ENCODE measurements at regions of chrX and their contacts with region 1.

Region 1: DNA sequence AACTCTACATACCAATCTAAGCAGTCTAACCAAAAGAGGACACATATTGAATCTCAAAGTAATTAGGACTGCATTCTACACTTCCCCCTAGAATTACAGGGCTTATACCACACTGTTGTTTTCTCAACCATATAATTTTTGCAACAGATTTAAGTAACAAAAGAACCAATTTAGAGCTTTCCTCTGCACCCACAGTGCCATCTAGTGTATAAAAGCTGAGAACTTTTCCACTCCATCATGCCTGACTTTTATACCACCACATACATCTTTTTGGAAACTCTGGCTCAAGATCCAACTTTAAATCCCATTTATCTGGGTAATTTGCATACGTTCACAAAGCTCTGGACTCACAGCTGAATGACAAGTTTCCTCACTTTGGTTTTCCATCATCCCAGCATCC is 99.5 kb downstream of the EFHC2 start:
- DNase-seq: no peak
- ATAC-seq: no peak
- H3K4me3 Mint-ChIP-seq: no peak overlapping the region
- H3K27ac Mint-ChIP-seq: no peak overlapping the region
- H3K4me1 Mint-ChIP-seq: peaks cover 4% of the 10 kb centered on the region
- H3K27me3 Mint-ChIP-seq: no peaks in the 10 kb centered on the region

Region 2: DNA sequence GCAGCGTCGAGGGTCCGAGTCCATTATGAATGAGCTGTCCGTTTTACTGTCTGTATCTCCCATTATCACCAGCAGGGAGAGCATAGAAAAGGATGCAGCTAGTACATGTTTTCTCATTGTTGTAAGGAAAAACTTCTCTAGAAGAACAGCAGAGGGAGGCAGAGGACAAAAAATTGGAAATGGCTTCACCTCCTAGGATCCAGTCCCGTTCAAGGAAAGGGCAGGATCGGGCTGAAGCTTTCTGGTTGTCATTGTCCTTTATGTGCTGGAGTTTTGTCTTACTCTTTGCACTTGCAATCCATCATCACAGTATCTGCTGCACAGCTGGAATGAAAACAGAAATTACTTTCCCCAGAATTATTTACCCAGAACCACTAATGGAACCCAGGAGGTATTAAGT is 285.5 kb before region 1 on chrX:
- CTCF ChIA-PET with region 1: interaction called, 20 read pairs
- DNase-seq: no peak
- ATAC-seq: peak; percentile 42
- H3K4me3 Mint-ChIP-seq: no peak overlapping the region
- H3K27ac Mint-ChIP-seq: no peak overlapping the region
- H3K4me1 Mint-ChIP-seq: peaks cover 2% of the 10 kb centered on the region
- H3K27me3 Mint-ChIP-seq: peaks cover 5% of the 10 kb centered on the region